ENCODE measurements at regions of chr19 and their contacts with region 1.

Region 1: DNA sequence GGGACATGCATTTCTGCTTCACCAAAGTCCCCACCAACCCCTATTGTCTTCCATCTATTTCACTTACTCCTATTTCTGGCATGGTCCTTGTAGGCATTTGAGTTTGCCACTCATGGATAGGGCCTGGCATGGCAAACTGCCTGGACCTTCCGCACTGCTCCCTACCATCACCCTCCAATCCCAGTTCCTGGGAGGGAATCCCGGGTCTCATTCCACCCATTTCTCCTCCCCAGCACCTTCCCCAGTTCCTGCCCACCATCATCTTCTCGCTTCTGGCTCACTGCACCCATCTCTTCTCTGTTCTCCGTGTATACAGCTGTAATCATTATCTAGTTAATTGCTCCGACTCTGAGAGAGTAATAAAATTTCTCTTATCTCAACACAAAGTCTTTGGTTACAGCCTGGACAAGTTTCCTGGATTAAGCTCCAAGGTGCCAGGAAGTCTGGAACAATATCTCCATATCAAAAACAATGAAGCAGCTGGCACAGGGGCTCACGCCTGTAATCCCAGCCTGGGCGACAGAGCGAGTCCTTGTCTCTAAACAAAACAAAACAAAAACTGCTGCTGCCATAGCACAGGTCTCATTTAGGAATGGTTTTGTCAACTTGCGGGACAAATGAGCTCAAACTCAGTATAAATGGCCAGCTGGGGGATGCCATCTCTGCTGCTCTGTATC is 17.0 kb upstream of the COX7A1 start:
- DNase-seq: peak; percentile 30
- H3K4me3 ChIP-seq: no peak overlapping the region
- H3K27ac ChIP-seq: peak overlapping the region; percentile 54 to 68
- H3K4me1 ChIP-seq: no peaks in the 10 kb centered on the region
- H3K27me3 ChIP-seq: no peaks in the 10 kb centered on the region
- CTCF ChIP-seq: no peak
- POLR2A ChIP-seq: no peak

Region 2: DNA sequence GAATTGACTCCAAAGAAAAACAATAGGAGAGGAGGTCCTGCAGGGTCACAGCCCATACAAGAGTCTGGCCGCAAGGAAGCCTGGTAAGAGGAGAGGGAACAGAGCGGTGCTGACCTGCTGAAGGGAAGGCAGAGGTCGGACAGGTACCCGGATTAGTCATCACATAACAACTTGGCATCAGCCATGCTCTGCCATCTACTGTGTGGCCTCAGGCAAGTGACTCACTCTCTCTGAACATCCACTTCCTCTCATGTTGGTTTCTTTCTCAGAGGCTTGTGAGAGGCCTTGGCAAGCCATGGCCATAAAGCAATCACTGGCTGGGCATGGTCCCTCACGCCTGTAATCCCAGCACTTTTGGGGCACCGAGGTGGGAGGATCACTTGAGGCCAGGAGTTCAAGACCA is 36.7 kb before region 1 on chr19:
- intact Hi-C with region 1: loop called (anchors 1 kb)
- DNase-seq: no peak
- H3K4me3 ChIP-seq: no peak overlapping the region
- H3K27ac ChIP-seq: no peak overlapping the region
- H3K4me1 ChIP-seq: peaks cover 6% of the 10 kb centered on the region
- H3K27me3 ChIP-seq: no peaks in the 10 kb centered on the region
- CTCF ChIP-seq: no peak
- POLR2A ChIP-seq: no peak

Region 3: DNA sequence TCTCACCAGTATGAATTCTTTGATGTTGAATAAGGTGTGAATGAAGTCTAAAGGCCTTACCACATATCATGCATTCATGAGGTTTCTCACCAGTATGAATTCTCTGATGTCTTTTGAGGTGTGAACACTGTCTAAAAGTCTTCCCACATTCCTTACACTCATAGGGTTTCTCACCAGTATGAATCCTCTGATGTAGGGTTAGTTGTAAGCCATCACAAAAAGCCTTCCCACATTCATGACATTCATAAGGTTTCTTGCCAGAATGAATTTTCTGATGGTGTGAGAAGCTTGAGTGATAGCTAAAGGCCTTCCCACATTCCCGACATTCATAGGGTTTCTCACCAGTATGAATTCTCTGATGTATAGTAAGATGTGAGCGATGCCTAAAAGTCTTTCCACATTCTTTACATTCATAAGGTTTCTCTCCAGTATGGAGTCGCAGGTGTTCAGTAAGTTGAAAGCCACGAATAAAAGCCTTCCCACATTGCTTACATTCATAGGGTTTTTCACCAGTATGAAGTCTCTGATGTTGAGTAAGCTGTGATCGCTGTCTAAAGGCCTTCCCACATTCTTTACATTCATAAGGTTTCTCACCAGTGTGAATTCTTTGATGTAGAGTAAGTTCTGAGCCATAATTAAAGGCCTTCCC is 469.8 kb after region 1 on chr19:
- intact Hi-C with region 1: no loop called
- DNase-seq: no peak
- H3K4me3 ChIP-seq: no peak overlapping the region
- H3K27ac ChIP-seq: no peak overlapping the region
- H3K4me1 ChIP-seq: no peaks in the 10 kb centered on the region
- H3K27me3 ChIP-seq: no peaks in the 10 kb centered on the region
- CTCF ChIP-seq: no peak
- POLR2A ChIP-seq: no peak